ENCODE measurements at regions of chr1 and their contacts with region 1.

Region 1: DNA sequence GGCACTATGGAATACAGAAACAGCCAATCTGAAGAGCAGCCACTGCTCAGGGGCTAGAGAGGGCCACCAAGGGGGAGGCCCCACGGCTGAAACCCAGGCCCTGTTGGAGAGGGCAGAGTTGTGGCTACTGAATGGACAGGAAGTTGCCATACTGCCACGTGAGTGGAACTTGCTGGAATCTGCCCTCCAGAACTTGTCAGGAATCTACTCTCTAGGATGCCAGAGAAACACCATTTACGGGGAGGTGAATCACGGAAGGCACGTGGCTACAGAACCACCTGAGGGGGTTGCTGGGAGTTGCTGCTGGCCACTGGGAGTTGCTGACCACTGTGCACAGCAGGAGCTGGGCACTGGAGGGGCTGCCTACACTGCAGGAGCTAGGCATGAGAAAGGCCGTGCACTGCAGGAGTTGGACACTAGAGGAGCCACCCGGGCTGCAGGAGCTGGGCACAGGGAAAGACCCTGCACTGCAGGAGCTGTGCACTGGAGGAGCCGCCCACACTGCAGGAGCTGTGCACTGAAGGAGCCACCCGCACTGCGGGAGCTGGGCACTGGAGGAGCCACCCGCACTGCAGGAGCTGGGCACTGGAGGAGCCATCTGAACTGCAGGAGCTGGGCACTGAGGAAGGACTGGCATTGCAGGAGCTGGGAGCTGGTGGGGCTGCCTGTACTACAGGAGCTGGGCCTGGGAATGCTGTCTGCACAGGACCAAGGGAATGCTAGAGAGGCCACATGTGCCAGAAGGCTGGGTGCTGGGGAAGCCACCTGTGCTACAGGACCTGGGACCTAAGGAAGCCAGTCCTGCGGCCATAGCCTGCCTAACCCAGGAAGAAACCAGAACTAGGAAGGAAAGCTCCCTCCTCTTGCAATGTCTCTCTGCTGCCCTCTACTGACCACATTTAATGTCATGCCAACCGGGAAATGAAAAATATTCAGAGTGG is 343.4 kb downstream of the MATN1 start:
- DNase-seq: peak; percentile 67
- ATAC-seq: peak; percentile 43
- H3K4me3 Mint-ChIP-seq: no peak overlapping the region
- H3K27ac Mint-ChIP-seq: no peak overlapping the region
- H3K4me1 Mint-ChIP-seq: peaks cover 1% of the 10 kb centered on the region
- H3K27me3 Mint-ChIP-seq: no peaks in the 10 kb centered on the region

Region 2: GRCh38 chr1:29793101-29793546 is 586.8 kb before region 1 on chr1:
- CTCF ChIA-PET with region 1: interaction called, 11 read pairs
- POLR2A ChIA-PET with region 1: no interaction called
- DNase-seq: peak; percentile 77
- ATAC-seq: no peak
- H3K4me3 Mint-ChIP-seq: no peak overlapping the region
- H3K27ac Mint-ChIP-seq: no peak overlapping the region
- H3K4me1 Mint-ChIP-seq: no peaks in the 10 kb centered on the region
- H3K27me3 Mint-ChIP-seq: no peaks in the 10 kb centered on the region

Region 3: DNA sequence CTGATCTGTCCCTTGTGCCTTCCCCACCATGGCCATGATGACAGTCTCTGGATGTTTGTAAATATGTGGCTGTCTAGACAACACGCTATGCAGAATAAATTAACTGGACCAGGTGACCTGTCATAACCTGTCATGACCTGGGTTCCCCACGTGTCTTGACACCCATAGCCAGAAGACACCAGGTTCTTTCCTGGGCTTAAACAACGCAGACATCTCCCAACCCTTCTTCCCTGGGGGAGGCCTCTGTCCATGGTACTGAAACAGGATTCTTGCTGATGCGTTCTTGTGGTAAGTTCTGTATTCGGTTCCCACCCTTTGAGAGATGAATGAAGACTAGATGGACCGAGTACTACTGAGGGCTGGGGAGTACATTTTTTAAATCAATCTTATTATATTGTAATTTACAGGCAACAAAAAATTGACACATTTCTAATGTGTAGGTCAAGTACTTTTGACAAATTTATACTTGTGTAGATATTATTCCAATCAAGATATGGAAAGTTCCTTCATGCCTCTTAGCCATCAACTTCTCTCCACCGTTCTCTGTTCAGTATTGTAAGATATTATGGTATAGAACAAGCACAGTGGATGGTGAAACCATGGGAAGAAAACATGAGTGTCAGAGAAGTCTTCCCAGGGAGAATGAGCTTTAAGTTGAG is 404.8 kb before region 1 on chr1:
- CTCF ChIA-PET with region 1: no interaction called
- POLR2A ChIA-PET with region 1: no interaction called
- DNase-seq: peak; percentile 25
- ATAC-seq: no peak
- H3K4me3 Mint-ChIP-seq: no peak overlapping the region
- H3K27ac Mint-ChIP-seq: no peak overlapping the region
- H3K4me1 Mint-ChIP-seq: no peaks in the 10 kb centered on the region
- H3K27me3 Mint-ChIP-seq: no peaks in the 10 kb centered on the region